Activated CD8-positive, alpha-beta memory T cell treated with anti-CD3 and anti-CD28 coated beads, Interleukin-2, amount 10 ng/mL, durations not matched to agents 7 days and 5 days (primary cell): ENCODE measurements at regions of chr2 and their contacts with region 1.

Region 1: GRCh38 chr2:74587664-74588277 is 33.3 kb downstream of the DOK1 start:
- DNase-seq: peak; percentile 79
- ATAC-seq: peak; percentile 68
- H3K4me3 Mint-ChIP-seq: no peak overlapping the region
- H3K27ac Mint-ChIP-seq: peak overlapping the region; percentile 26
- H3K4me1 Mint-ChIP-seq: peaks cover 37% of the 10 kb centered on the region
- H3K27me3 Mint-ChIP-seq: peaks cover 27% of the 10 kb centered on the region

Region 2: GRCh38 chr2:74472086-74472944 is 115.5 kb before region 1 on chr2 and contains the start of gene MRPL53:
- CTCF ChIA-PET with region 1: interaction called, 11 read pairs
- DNase-seq: peak; percentile 97
- ATAC-seq: peak; percentile 93
- H3K4me3 Mint-ChIP-seq: peak within 1 kb of the TSS; percentile 94
- H3K27ac Mint-ChIP-seq: peak within 1 kb of the TSS; percentile 95
- H3K4me1 Mint-ChIP-seq: peaks cover 31% of the 10 kb centered on the region
- H3K27me3 Mint-ChIP-seq: no peaks in the 10 kb centered on the region
- total RNA-seq, gene MRPL53: 93.9 to 111 TPM

Region 3: DNA sequence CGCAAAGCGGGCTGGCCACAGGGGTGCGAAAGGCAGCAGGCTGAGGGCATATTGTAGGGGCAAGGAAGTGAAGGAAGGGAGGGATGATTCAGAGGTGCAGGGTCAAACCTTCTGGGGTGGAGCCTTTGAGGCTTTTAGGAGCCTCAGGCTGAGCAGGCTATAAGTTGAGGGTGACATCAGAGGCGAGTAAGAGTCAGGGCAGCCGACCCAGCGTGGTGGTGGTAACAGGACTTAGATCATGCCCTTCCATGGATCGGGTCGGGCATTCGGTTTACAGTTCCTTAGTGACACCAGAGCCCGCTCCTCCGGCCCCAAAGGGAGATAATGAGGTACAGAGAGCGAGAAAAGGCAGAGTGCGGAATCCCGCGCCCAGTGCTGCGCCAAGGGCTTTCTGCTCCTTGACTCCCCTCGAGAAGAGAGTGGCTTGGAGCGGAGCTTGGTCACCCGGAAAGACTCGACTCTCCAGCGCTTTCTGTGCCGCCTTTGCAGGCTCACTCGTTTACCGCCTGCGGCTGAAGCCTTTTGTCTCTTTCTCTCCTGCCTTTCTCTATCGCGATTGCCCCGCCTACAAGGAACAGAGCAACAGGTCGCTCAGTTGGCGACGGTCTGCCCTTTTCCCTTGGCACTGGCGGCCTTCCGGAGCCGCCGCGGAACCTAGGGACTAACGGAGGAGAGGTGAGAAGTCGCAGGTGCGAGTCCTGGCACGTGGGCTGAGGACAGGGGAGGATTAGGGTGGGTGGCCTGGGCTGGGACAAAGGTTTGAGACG is 89.1 kb before region 1 on chr2:
- CTCF ChIA-PET with region 1: interaction called, 15 read pairs
- DNase-seq: peak; percentile 69
- ATAC-seq: peak; percentile 63
- H3K4me3 Mint-ChIP-seq: peak overlapping the region; percentile 84
- H3K27ac Mint-ChIP-seq: peak overlapping the region; percentile 80
- H3K4me1 Mint-ChIP-seq: peaks cover 33% of the 10 kb centered on the region
- H3K27me3 Mint-ChIP-seq: peaks cover 49% of the 10 kb centered on the region

Region 4: GRCh38 chr2:74553892-74554645 is 33.7 kb before region 1 on chr2 and contains the start of gene LOXL3:
- CTCF ChIA-PET with region 1: interaction called, 124 read pairs
- DNase-seq: peak; percentile 86
- ATAC-seq: peak; percentile 64
- H3K4me3 Mint-ChIP-seq: peak within 1 kb of the TSS; percentile 91
- H3K27ac Mint-ChIP-seq: peak within 1 kb of the TSS; percentile 96
- H3K4me1 Mint-ChIP-seq: peaks cover 39% of the 10 kb centered on the region
- H3K27me3 Mint-ChIP-seq: peaks cover 22% of the 10 kb centered on the region
- total RNA-seq, gene LOXL3: 0.76 to 1.8 TPM

Region 5: DNA sequence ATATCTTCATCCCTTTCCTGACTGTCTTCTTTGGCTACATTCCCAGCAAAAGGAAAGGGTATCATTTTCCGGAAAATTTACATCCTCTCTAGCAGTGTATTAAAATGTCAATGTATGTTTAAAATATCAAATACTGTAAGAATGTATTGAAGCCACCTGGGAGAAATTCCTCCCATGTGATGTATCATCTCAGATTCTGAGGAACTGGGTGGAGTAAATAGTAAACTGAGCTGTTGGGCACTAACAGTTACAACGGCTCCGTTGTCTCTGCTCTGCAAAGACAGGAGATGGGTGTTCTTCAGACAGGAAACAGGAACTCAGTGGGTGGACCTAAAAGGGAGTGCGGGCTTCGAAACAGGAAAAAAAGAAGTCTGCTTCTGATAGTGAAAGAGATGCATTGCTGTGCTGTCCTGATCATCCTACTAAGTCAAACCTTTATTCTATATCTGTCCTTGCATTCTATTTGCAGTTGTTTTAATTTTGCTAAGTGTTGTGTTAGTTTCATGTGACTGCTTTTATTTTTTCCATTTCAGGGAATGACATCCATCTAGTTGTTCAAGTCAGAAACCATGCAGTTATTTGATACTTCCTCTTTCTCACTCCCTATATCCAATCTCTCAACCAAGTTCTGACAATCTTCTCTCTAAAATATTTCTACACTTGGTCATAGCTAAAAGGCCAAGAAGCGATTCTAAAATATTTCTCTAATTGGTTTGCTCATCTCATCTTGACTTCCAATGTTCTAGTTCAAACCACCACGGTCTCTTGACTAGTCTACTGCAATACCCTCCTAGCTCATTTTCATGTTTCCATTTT is 13.8 kb before region 1 on chr2:
- CTCF ChIA-PET with region 1: interaction called, 39 read pairs
- DNase-seq: peak; percentile 61
- ATAC-seq: peak; percentile 78
- H3K4me3 Mint-ChIP-seq: peak overlapping the region; percentile 52
- H3K27ac Mint-ChIP-seq: peak overlapping the region; percentile 70
- H3K4me1 Mint-ChIP-seq: peaks cover 42% of the 10 kb centered on the region
- H3K27me3 Mint-ChIP-seq: no peaks in the 10 kb centered on the region

Region 6: DNA sequence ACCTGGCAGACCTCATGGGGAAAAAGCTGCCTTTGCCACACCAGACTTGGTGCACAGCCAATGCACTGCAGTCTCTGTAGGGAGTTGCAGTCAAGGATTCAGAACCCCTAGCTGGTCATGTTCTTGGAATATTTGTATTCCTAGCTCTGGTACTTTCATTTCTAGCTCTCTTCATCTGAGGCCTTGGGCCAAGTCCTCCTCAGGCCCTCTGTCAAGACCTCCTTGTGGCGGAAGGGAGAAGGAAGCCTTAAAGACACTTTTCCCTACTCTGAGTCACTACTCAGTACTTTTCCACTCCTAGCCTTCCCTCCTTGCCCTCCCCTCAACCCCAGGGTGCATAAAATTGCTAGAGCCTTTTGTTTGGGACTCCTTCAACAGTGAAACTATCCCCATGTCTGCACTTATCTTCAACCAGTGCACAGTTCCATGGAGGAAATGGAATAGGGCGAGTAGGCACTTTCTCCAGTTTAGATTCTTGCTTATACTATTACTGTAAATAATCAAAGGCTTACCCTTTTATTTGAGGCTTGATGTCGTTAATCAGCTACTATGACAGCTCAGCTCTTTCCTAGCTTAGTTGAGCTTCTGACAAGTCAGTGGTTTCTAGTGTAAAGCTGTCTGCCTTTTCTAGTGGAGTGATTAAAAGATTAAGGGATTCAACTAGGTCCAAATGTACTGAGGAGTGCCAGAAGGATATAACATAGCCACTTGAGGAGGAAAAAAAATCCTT is 44.6 kb after region 1 on chr2:
- CTCF ChIA-PET with region 1: no interaction called
- DNase-seq: no peak
- ATAC-seq: no peak
- H3K4me3 Mint-ChIP-seq: no peak overlapping the region
- H3K27ac Mint-ChIP-seq: no peak overlapping the region
- H3K4me1 Mint-ChIP-seq: no peaks in the 10 kb centered on the region
- H3K27me3 Mint-ChIP-seq: peaks cover 34% of the 10 kb centered on the region